ENCODE measurements at regions of chr11 and their contacts with region 1.

Region 1: DNA sequence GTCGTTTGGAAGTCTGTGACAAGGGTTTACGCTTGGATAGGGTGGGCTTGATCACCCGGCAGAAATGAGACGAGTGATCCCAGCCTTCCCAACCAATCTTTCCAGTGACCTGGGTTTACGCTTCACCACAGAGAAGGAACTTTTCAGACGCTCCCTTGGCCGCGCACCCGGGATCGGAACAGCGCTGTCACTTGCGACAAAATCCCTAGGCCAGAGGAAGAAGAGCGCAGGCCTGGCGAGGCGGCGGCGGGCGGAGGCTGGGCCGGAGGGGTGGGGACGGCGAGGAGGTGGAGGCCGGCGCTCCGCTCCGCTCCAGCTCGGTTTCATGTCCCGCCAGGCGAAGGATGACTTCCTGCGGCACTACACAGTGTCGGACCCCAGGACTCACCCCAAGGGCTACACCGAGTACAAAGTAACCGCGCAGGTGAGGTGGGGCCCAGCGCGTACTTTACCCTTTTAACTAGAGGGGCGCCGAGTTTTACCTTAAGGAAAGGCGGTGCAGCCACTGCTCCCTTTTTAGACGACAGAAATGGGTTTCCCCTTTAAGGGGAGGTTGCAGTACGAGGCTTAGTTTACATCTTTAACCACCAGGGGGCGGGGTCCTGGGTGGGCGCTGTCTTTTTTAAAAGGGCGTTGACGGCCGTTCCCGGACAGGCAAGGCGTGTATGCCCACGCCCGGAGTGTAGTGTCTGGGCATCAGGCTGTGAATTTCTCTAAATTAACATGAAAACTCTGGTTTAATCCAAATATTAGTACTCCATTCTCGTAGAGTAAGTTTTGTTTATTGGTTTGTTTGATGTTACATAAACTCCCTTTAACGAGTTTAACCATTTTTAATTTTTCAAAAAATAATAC is at the start of gene SNX15:
- DNase-seq: peak; percentile 61 to 95 (median 94)
- ATAC-seq: peak; percentile 97
- H3K4me3 ChIP-seq: peak within 1 kb of the TSS; percentile 41
- H3K4me3 Mint-ChIP-seq: peak within 1 kb of the TSS; percentile 66 to 91 (median 83)
- H3K27ac ChIP-seq: peak within 1 kb of the TSS; percentile 59
- H3K27ac Mint-ChIP-seq: peak within 1 kb of the TSS; percentile 59 to 95 (median 87)
- H3K4me1 ChIP-seq: peaks cover 9 to 14% of the 10 kb centered on the region in 2 donors
- H3K4me1 Mint-ChIP-seq: peaks cover 12 to 24% (median 21%) of the 10 kb centered on the region in 7 donors
- H3K27me3 ChIP-seq: no peaks in the 10 kb centered on the region
- H3K27me3 Mint-ChIP-seq: no peaks in the 10 kb centered on the region
- total RNA-seq, gene SNX15: 13.1 to 29.0 (median 21.7) TPM

Region 2: GRCh38 chr11:64916775-64917662 is 110.4 kb before region 1 on chr11 and contains the start of gene ATG2A:
- CTCF ChIA-PET with region 1: no interaction called
- POLR2A ChIA-PET with region 1: interaction called, 3 read pairs
- intact Hi-C with region 1: loop called (anchors 1 kb)
- DNase-seq: peak; percentile 95 to 100 (median 99)
- ATAC-seq: peak; percentile 97
- H3K4me3 ChIP-seq: peak within 1 kb of the TSS; percentile 92
- H3K4me3 Mint-ChIP-seq: peak within 1 kb of the TSS; percentile 88 to 98 (median 91)
- H3K27ac ChIP-seq: peak within 1 kb of the TSS; percentile 83
- H3K27ac Mint-ChIP-seq: peak within 1 kb of the TSS; percentile 81 to 99 (median 91)
- H3K4me1 ChIP-seq: peaks cover 18 to 22% of the 10 kb centered on the region in 2 donors
- H3K4me1 Mint-ChIP-seq: peaks cover 14 to 33% (median 25%) of the 10 kb centered on the region in 7 donors
- H3K27me3 ChIP-seq: no peaks in the 10 kb centered on the region
- H3K27me3 Mint-ChIP-seq: no peaks in the 10 kb centered on the region
- total RNA-seq, gene ATG2A: 30.6 to 105 (median 36.2) TPM

Region 3: DNA sequence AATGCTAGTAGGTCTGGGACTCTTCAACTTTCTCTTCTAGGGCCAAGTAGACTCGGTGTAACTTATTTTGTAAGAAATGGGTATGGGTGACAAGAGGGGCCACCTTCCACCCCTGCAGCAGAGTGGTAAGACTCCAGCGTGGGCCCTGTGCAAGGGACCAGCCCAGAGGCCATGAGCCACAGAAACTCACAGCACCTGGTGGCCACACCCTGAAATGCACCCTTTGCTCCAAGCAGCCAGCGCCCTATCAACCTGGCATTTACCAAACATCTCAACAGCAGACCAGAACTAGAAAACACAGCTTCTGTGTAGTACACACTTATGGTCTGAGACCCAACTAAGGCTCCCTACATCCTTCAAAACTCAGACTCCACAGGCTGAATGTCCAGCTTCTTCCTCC is 50.7 kb after region 1 on chr11:
- CTCF ChIA-PET with region 1: no interaction called
- POLR2A ChIA-PET with region 1: interaction called, 3 read pairs
- intact Hi-C with region 1: loop called in 1 of 2 experiments (anchors 1 kb)
- DNase-seq: peak; percentile 47 to 71 (median 64)
- ATAC-seq: peak; percentile 97
- H3K4me3 ChIP-seq: no peak overlapping the region
- H3K4me3 Mint-ChIP-seq: peak overlapping the region in 1 of 10 donors; percentile 48
- H3K27ac ChIP-seq: no peak overlapping the region
- H3K27ac Mint-ChIP-seq: peak overlapping the region; percentile 9 to 83 (median 63)
- H3K4me1 ChIP-seq: no peaks in the 10 kb centered on the region
- H3K4me1 Mint-ChIP-seq: peaks cover 3 to 48% (median 7%) of the 10 kb centered on the region in 7 donors
- H3K27me3 ChIP-seq: no peaks in the 10 kb centered on the region
- H3K27me3 Mint-ChIP-seq: no peaks in the 10 kb centered on the region

Region 4: GRCh38 chr11:65095974-65096806 is 68.8 kb after region 1 on chr11 and contains the start of gene VPS51:
- CTCF ChIA-PET with region 1: interaction called, 6 read pairs
- POLR2A ChIA-PET with region 1: interaction called, 6 read pairs
- intact Hi-C with region 1: loop called (anchors 1 kb)
- DNase-seq: peak; percentile 71 to 92 (median 87)
- ATAC-seq: peak; percentile 93
- H3K4me3 ChIP-seq: peak within 1 kb of the TSS; percentile 92
- H3K4me3 Mint-ChIP-seq: peak within 1 kb of the TSS; percentile 83 to 97 (median 94)
- H3K27ac ChIP-seq: peak within 1 kb of the TSS; percentile 88
- H3K27ac Mint-ChIP-seq: peak within 1 kb of the TSS; percentile 89 to 98 (median 97)
- H3K4me1 ChIP-seq: peaks cover 9 to 15% of the 10 kb centered on the region in 2 donors
- H3K4me1 Mint-ChIP-seq: peaks cover 8 to 28% (median 19%) of the 10 kb centered on the region in 7 donors
- H3K27me3 ChIP-seq: no peaks in the 10 kb centered on the region
- H3K27me3 Mint-ChIP-seq: no peaks in the 10 kb centered on the region
- total RNA-seq, gene VPS51: 159 to 269 (median 256) TPM

Region 5: DNA sequence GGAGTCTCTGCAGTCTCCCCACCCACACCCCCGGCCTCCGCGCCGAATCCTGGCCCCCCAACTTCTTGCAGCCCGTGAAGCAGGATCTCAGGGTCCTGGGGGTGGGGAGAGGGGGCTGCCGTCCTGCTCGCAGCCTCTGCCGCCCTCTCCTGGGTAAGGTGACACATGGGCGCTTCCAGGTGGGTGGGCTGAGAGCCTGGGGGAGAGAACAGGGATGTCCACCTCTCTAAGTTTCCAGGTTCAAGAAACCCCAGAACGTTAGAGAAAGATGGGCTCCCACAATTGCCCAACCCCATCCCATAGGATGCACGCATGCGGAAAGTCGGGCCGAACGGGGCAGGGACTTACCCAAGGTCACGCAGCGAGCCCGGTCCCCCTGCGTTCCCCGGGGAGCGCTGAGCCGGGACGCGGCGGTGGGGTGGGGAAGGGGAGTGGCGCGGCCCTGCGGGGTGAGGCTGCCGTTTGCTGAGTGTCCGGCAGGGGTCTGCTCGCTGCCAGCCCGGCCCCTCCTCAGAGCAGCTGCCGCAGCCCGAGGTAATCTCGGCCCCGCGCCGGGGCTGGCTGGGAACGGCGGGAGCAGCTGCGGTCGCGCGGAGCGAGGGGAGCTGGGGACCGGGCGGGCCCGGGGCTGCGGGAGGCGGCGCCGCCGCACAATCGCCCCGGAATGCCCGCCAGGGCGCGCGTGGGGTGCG is 153.6 kb after region 1 on chr11:
- CTCF ChIA-PET with region 1: no interaction called
- POLR2A ChIA-PET with region 1: no interaction called
- intact Hi-C with region 1: loop called in 1 of 2 experiments (anchors 1 kb)
- DNase-seq: peak in 8 of 9 donors; percentile 41 to 71 (median 45)
- ATAC-seq: peak; percentile 85
- H3K4me3 ChIP-seq: peak overlapping the region; percentile 67
- H3K4me3 Mint-ChIP-seq: peak overlapping the region; percentile 80 to 94 (median 90)
- H3K27ac ChIP-seq: peak overlapping the region; percentile 93
- H3K27ac Mint-ChIP-seq: peak overlapping the region; percentile 36 to 91 (median 84)
- H3K4me1 ChIP-seq: peaks cover 6 to 8% of the 10 kb centered on the region in 2 donors
- H3K4me1 Mint-ChIP-seq: peaks cover 7 to 30% (median 22%) of the 10 kb centered on the region in 7 donors
- H3K27me3 ChIP-seq: no peaks in the 10 kb centered on the region
- H3K27me3 Mint-ChIP-seq: peaks cover 0 to 22% (median 0%) of the 10 kb centered on the region in 5 donors